MCF 10A (cell line): ENCODE measurements at regions of chr6 and their contacts with region 1.

Region 1: DNA sequence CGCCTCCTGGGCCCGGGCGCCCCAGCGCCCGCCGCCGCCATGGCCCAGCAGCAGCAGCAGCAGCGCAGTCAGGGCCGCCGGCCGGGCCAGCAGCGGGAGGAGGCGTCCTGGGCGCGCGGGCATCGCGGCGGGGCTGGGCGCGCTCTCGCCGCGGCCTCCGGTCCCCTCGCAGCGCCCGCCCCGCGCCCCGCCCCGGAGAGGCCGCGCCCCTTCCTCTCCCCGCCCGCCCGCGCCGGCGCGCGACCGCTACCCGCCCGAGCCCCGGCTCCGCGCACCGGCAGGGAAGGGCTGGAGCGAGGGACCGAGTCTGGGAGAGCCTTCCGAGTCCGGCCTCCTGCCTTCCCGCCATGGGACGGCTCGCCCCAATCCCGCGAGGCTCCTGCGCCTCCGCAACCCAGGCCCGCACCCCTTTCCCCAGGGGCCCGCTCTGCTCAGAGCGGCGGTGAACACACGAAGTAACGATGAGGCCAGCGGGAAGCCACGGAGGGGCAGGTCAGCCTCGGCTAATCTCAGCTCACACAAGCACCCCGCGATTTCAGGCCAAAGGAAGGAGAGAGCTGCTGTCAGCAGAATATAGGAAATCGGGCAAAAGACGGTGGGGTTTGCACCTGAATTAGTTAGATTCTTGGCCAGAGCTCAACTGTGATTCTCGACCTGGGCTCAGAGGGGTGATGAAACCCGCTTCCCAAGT is at the start of gene TXNDC5:
- DNase-seq: peak; percentile 73
- H3K4me3 Mint-ChIP-seq: no peak within 1 kb of the TSS
- H3K27ac Mint-ChIP-seq: peak within 1 kb of the TSS; percentile 86
- H3K4me1 Mint-ChIP-seq: peaks cover 10% of the 10 kb centered on the region
- H3K27me3 Mint-ChIP-seq: no peaks in the 10 kb centered on the region
- CTCF ChIP-seq: no peak
- total RNA-seq, gene TXNDC5: 195 and 263 TPM in 2 replicates

Region 2: GRCh38 chr6:7725849-7726415 is 184.9 kb before region 1 on chr6 and contains the start of gene BMP6:
- CTCF ChIA-PET with region 1: interaction called, 13 read pairs
- POLR2A ChIA-PET with region 1: interaction called, 9 read pairs
- intact Hi-C with region 1: loop called (anchors 2 kb)
- DNase-seq: peak; percentile 90
- H3K4me3 Mint-ChIP-seq: peak within 1 kb of the TSS; percentile 79
- H3K27ac Mint-ChIP-seq: no peak within 1 kb of the TSS
- H3K4me1 Mint-ChIP-seq: peaks cover 8% of the 10 kb centered on the region
- H3K27me3 Mint-ChIP-seq: peaks cover 53% of the 10 kb centered on the region
- CTCF ChIP-seq: no peak
- total RNA-seq, gene BMP6: 0.12 and 0.56 TPM in 2 replicates

Region 3: DNA sequence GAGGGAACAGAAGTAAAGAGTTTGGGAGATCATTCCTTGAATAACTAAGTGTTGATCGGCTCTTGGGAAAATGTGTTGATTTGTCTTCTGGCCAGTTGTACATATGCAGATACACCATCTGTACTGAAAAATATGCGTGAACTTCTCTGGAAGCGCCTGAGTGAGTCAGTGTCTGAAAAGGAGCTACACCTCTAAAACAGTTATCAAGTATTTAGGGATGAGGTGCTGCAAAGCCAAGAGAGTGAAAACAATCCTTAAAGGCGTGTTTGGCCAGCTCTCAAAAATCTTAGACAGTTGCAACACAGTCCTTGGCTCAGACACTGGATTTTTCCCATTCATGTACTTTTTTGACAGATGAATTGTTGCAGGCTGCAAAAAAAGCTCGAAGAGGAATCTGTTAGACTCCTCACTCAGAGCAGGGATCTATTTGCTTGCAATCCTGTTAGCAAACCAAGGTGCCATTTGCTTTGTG is 123.6 kb before region 1 on chr6:
- CTCF ChIA-PET with region 1: interaction called, 3 read pairs
- POLR2A ChIA-PET with region 1: interaction called, 13 read pairs
- intact Hi-C with region 1: no loop called
- DNase-seq: peak; percentile 90
- H3K4me3 Mint-ChIP-seq: peak overlapping the region; percentile 54
- H3K27ac Mint-ChIP-seq: peak overlapping the region; percentile 30
- H3K4me1 Mint-ChIP-seq: peaks cover 25% of the 10 kb centered on the region
- H3K27me3 Mint-ChIP-seq: peaks cover 23% of the 10 kb centered on the region
- CTCF ChIP-seq: no peak

Region 4: DNA sequence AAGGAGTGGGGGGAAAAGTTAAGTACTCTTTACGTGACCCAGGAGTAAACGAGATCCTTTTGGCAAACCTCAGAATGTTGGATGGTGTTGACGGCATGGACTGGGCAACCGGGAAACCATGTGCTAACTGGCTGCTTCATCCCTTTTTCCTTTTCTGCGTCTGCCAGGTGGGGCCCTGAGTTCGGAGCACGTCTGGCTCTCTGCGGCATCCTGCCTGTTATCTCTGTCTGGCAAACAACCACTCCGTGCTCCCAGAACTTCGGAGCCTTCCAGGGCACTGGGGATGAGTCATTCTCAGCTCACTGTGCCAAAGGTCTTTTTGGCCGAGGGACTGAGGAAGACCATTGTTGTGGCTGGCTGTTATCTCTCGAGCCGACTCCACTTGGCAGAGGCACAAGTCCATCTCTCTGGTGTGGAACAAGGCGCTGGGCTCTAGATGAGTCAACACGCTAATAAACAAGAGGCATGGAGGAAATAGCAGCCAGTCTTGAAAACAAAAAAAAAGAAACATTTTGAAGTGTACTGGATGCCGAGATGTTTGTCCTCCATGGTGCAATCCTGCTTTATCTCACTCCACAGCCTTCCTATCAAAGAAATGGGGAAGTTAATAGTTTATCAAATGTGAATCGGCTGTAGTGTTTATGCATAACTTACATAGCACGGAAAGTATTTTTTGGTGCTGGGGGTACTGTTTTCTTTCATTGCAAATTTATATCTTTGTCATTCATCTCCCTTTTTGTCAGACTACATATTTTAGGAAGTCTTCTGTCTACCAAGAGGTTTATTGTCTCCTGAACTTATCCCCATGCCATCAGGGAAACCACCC is 64.4 kb after region 1 on chr6:
- CTCF ChIA-PET with region 1: no interaction called
- POLR2A ChIA-PET with region 1: no interaction called
- intact Hi-C with region 1: loop called (anchors 1 kb)
- DNase-seq: peak; percentile 98
- H3K4me3 Mint-ChIP-seq: peak overlapping the region; percentile 63
- H3K27ac Mint-ChIP-seq: peak overlapping the region; percentile 44
- H3K4me1 Mint-ChIP-seq: peaks cover 11% of the 10 kb centered on the region
- H3K27me3 Mint-ChIP-seq: no peaks in the 10 kb centered on the region
- CTCF ChIP-seq: no peak

Region 5: GRCh38 chr6:7992002-7992815 is 81.4 kb after region 1 on chr6:
- CTCF ChIA-PET with region 1: interaction called, 3 read pairs
- POLR2A ChIA-PET with region 1: interaction called, 5 read pairs
- intact Hi-C with region 1: loop called (anchors 5 kb)
- DNase-seq: peak; percentile 52
- H3K4me3 Mint-ChIP-seq: no peak overlapping the region
- H3K27ac Mint-ChIP-seq: no peak overlapping the region
- H3K4me1 Mint-ChIP-seq: peaks cover 14% of the 10 kb centered on the region
- H3K27me3 Mint-ChIP-seq: no peaks in the 10 kb centered on the region
- CTCF ChIP-seq: peak; percentile 35

Region 6: DNA sequence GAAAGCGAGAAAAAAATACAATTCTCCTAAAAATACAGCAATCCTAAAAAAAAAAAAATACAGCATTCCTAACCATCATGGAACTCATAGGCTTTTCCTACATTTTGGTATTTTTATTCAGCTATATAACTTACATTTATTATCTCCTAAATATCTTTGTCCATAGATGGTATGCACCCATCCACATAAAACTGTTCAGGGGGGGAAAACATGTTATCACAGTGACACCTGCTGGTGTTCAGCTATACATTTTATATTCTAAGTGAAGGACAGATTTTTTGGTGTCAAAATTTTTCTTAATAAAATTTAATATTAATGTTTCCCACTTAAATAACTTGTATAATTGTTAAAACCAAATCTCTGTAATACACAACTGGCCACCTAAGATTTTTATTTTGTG is 95.4 kb after region 1 on chr6:
- CTCF ChIA-PET with region 1: interaction called, 3 read pairs
- POLR2A ChIA-PET with region 1: interaction called, 4 read pairs
- intact Hi-C with region 1: loop called (anchors 2 kb)
- DNase-seq: peak; percentile 49
- H3K4me3 Mint-ChIP-seq: no peak overlapping the region
- H3K27ac Mint-ChIP-seq: no peak overlapping the region
- H3K4me1 Mint-ChIP-seq: no peaks in the 10 kb centered on the region
- H3K27me3 Mint-ChIP-seq: no peaks in the 10 kb centered on the region
- CTCF ChIP-seq: peak; percentile 38

Region 7: DNA sequence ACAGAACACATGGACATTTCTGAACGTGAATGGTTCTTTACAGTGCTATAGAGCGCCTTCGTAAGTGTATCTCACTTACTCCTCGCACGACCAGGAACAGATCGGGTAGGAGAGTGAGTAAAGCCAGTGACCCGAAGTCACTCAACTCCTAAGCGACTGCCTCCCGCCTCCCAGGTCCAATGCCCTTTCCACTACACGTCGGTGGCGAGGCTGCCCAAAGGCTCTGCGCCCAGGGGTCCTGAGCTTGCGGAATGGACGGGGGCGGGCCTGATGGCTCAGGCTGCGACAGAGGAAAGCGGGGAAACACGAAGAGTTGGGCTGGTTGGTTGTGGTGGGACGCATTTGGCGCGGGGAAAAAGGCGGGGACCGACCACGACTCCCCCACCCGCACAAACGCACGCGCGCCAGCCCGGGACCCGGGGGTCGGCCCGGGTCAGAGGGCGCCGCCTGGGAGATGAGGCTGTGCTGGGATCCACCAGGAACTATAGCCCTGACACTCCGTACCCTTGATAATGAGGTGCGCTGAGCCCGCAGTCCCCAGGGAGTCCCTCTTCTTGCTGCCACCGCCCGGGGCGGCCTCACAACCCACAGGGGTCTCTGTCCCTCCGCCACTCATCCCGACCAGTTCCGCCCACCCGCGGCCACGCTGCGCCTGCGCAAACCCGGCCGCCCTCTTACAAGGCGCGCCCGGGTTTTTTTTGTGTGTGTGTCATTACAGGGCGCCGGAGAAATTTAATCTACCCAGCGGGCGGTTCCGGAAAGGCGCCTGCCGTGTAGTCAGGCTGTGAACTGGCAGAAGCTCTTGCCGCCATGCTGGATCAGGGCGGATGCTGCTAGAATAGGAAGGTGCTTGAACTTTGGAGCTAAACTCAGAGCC is 153.2 kb after region 1 on chr6 and contains the start of gene BLOC1S5:
- CTCF ChIA-PET with region 1: interaction called, 7 read pairs
- POLR2A ChIA-PET with region 1: interaction called, 6 read pairs
- intact Hi-C with region 1: loop called (anchors 2 kb)
- DNase-seq: peak; percentile 96
- H3K4me3 Mint-ChIP-seq: peak within 1 kb of the TSS; percentile 86
- H3K27ac Mint-ChIP-seq: peak within 1 kb of the TSS; percentile 82
- H3K4me1 Mint-ChIP-seq: peaks cover 5% of the 10 kb centered on the region
- H3K27me3 Mint-ChIP-seq: no peaks in the 10 kb centered on the region
- CTCF ChIP-seq: no peak
- total RNA-seq, gene BLOC1S5: 7.7 and 10.9 TPM in 2 replicates